PC-9 (cell line): ENCODE measurements at regions of chr3 and their contacts with region 1.

Region 1: DNA sequence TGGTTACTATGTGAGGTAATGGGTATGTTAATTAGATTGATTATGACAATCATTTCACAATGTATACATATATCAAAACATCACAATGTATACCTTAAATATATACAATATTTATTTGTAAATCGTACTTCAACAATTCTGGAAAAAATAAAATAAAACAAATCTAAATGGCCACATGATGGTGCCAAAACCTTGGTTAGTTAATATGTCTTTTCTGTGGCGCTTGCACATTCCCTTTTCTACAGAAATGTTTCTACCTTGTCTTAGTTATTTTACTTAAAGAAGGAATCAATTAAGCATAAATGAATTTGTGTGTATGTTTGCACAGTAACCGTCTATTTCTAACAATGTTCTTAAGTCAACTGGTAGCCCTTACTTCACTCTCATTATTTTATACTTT is 53.4 kb downstream of the OXSM start:
- DNase-seq: no peak
- H3K4me3 ChIP-seq: no peak overlapping the region
- H3K27ac ChIP-seq: no peak overlapping the region
- H3K4me1 ChIP-seq: no peaks in the 10 kb centered on the region
- H3K27me3 ChIP-seq: no peaks in the 10 kb centered on the region
- CTCF ChIP-seq: peak; percentile 45

Region 2: GRCh38 chr3:25897019-25897418 is 53.7 kb after region 1 on chr3:
- CTCF ChIA-PET with region 1: no interaction called
- POLR2A ChIA-PET with region 1: no interaction called
- intact Hi-C with region 1: loop called (anchors 2 kb)
- DNase-seq: peak in 1 of 2 experiments; percentile 27
- H3K4me3 ChIP-seq: no peak overlapping the region
- H3K27ac ChIP-seq: no peak overlapping the region
- H3K4me1 ChIP-seq: no peaks in the 10 kb centered on the region
- H3K27me3 ChIP-seq: no peaks in the 10 kb centered on the region
- CTCF ChIP-seq: peak; percentile 55; the same call in 1 of the 2 replicates

Region 3: DNA sequence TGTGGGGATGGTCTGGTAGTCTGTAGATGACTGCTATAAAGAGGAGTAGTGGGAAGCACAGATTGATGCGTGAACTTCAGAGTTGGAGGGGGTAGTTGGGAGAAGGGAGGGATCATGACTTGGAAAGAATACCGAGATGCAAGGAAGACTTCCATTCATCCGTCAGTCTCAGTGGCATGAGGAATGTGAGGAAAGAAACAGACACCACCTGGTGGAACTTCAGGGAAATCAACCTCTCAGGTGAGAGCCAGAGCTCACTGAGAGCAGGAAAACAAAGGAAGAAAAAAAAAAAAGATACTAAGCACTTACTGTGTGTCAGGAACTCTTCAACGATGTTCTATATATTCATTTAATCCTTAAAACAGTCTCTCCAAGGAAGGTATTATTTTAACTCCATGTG is 118.9 kb after region 1 on chr3:
- CTCF ChIA-PET with region 1: no interaction called
- POLR2A ChIA-PET with region 1: no interaction called
- intact Hi-C with region 1: loop called (anchors 5 kb)
- DNase-seq: peak; percentile 8 to 34
- H3K4me3 ChIP-seq: no peak overlapping the region
- H3K27ac ChIP-seq: no peak overlapping the region
- H3K4me1 ChIP-seq: no peaks in the 10 kb centered on the region
- H3K27me3 ChIP-seq: no peaks in the 10 kb centered on the region
- CTCF ChIP-seq: peak; percentile 57

Region 4: GRCh38 chr3:26712211-26713026 is 869.1 kb after region 1 on chr3:
- CTCF ChIA-PET with region 1: no interaction called
- POLR2A ChIA-PET with region 1: no interaction called
- intact Hi-C with region 1: loop called (anchors 5 kb)
- DNase-seq: peak in 1 of 2 experiments; percentile 2
- H3K4me3 ChIP-seq: no peak overlapping the region
- H3K27ac ChIP-seq: no peak overlapping the region
- H3K4me1 ChIP-seq: no peaks in the 10 kb centered on the region
- H3K27me3 ChIP-seq: no peaks in the 10 kb centered on the region
- CTCF ChIP-seq: peak; percentile 77

Region 5: DNA sequence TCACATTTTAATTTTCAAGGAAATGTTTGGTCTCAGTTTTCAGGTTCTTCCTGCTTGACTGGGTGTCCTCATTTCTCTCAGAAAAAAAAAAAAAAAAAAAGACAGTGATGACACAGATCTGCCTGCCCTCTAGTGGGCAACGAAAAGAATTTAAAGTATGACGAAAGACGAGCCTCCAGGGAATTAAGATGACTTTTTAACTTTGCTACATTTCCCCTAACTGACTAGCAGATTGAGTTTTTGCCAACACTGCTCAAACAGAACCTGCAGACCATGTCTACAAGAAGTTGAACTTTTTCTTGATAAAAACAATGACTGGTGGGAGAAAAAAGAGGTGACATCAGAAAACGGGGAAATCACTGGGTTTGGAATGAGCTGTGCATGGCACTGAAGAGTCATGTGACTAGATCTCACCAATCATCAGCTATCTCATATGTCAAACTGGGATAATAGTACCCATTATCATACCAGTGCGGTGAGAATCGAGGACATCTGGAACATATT is 1838.0 kb after region 1 on chr3:
- CTCF ChIA-PET with region 1: no interaction called
- POLR2A ChIA-PET with region 1: no interaction called
- intact Hi-C with region 1: no loop called
- DNase-seq: peak in 1 of 2 experiments; percentile 83
- H3K4me3 ChIP-seq: 0 out of 2 replicates have a peak overlapping the region, but pooled peaks have one; percentile 4
- H3K27ac ChIP-seq: peak overlapping the region; percentile 76
- H3K4me1 ChIP-seq: peaks cover 34% of the 10 kb centered on the region
- H3K27me3 ChIP-seq: no peaks in the 10 kb centered on the region
- CTCF ChIP-seq: peak; percentile 81